Esophagus muscularis mucosa (tissue), 4 donors: ENCODE measurements at regions of chr11 and their contacts with region 1.

Region 1: DNA sequence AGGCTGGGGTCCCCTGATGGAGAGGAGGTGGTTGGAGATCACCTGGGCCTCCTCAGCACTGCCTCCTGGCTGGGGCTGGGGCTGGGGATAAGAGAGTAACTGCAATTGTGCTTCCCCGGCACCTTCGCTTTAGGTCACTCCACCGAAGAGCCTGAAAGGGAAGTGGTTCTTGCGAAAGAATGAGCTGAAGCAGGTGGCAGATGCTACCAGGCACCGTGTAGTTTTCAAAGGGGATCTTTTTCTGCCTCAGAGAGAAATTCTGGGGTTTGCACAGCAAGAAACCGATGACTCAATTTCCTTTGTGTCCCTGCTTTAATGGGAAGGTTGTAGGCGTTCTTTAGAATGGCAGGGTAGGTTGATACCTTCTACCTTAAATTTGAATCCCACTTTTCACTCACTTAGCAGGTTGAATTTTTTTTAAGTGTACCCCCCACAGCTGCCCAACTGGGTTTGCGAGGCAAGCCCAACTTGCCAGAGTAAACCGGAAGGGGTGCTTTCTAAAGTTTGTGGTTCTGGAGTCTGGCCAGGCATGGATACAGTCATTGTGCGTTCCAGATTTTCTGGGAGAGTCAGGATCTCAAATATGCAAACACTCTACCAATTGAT is 5.3 kb downstream of the CD44 start:
- DNase-seq: no peak
- H3K4me3 ChIP-seq: peak overlapping the region in 3 of 4 donors; percentile 1 to 88 (median 12)
- H3K27ac ChIP-seq: peak overlapping the region; percentile 41 to 94 (median 76)
- H3K4me1 ChIP-seq: peaks cover 25 to 93% (median 77%) of the 10 kb centered on the region in 4 donors
- H3K27me3 ChIP-seq: no peaks in the 10 kb centered on the region
- CTCF ChIP-seq: no peak
- EP300 ChIP-seq: no peak
- POLR2A ChIP-seq: no peak

Region 2: GRCh38 chr11:35192347-35192746 is 48.1 kb after region 1 on chr11:
- intact Hi-C with region 1: no loop called
- DNase-seq: peak; percentile 91
- H3K4me3 ChIP-seq: no peak overlapping the region
- H3K27ac ChIP-seq: peak overlapping the region; percentile 71 to 80 (median 79)
- H3K4me1 ChIP-seq: peaks cover 19 to 80% (median 71%) of the 10 kb centered on the region in 4 donors
- H3K27me3 ChIP-seq: no peaks in the 10 kb centered on the region
- CTCF ChIP-seq: no peak
- EP300 ChIP-seq: no peak
- POLR2A ChIP-seq: no peak

Region 3: DNA sequence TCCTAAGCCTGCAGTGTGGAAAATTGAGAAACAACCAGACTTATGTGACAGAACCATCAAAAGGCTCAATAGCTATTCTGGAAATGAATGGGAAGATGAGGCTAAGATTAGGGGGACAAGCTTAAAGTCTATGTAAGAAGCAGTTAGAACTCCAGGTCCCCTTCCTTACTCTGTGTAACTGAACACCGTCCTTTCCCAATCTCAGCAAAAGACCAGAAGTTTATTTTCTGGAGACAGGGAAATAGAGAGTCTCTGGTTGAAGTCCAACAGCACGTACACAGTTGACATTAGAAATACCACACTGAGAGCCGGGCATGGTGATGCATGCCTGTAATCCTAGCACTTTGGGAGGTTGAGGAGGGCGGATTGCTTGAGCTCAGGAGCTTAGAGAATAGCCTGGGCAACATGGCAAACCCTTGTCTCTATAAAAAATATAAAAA is 88.7 kb after region 1 on chr11:
- intact Hi-C with region 1: loop called (anchors 5 kb)
- DNase-seq: no peak
- H3K4me3 ChIP-seq: no peak overlapping the region
- H3K27ac ChIP-seq: peak overlapping the region; percentile 58 to 78 (median 70)
- H3K4me1 ChIP-seq: peaks cover 0 to 36% (median 32%) of the 10 kb centered on the region in 4 donors
- H3K27me3 ChIP-seq: no peaks in the 10 kb centered on the region
- CTCF ChIP-seq: no peak
- EP300 ChIP-seq: no peak
- POLR2A ChIP-seq: no peak

Region 4: GRCh38 chr11:35257281-35257680 is 113.0 kb after region 1 on chr11:
- intact Hi-C with region 1: no loop called
- DNase-seq: no peak
- H3K4me3 ChIP-seq: no peak overlapping the region
- H3K27ac ChIP-seq: no peak overlapping the region
- H3K4me1 ChIP-seq: peaks cover 7 to 75% (median 70%) of the 10 kb centered on the region in 4 donors
- H3K27me3 ChIP-seq: no peaks in the 10 kb centered on the region
- CTCF ChIP-seq: no peak
- EP300 ChIP-seq: no peak
- POLR2A ChIP-seq: no peak